ENCODE measurements at regions of chr3 and their contacts with region 1.

Region 1: GRCh38 chr3:114272271-114272670 is 21.6 kb upstream of the TIGIT start:
- DNase-seq: no peak
- H3K4me3 ChIP-seq: no peak overlapping the region
- H3K27ac ChIP-seq: no peak overlapping the region
- H3K4me1 ChIP-seq: peaks cover 4% of the 10 kb centered on the region
- H3K27me3 ChIP-seq: no peaks in the 10 kb centered on the region
- CTCF ChIP-seq: no peak

Region 2: GRCh38 chr3:114223143-114223542 is 49.1 kb before region 1 on chr3:
- CTCF ChIA-PET with region 1: no interaction called
- dilution Hi-C with region 1: no loop called
- in situ Hi-C with region 1: no loop called
- intact Hi-C with region 1: no loop called
- DNase-seq: no peak
- H3K4me3 ChIP-seq: no peak overlapping the region
- H3K27ac ChIP-seq: no peak overlapping the region
- H3K4me1 ChIP-seq: no peaks in the 10 kb centered on the region
- H3K27me3 ChIP-seq: no peaks in the 10 kb centered on the region
- CTCF ChIP-seq: no peak

Region 3: GRCh38 chr3:114310695-114311094 is 38.4 kb after region 1 on chr3:
- CTCF ChIA-PET with region 1: no interaction called
- dilution Hi-C with region 1: loop called (anchors 5 kb)
- in situ Hi-C with region 1: no loop called
- intact Hi-C with region 1: no loop called
- DNase-seq: no peak
- H3K4me3 ChIP-seq: no peak overlapping the region
- H3K27ac ChIP-seq: no peak overlapping the region
- H3K4me1 ChIP-seq: no peaks in the 10 kb centered on the region
- H3K27me3 ChIP-seq: peaks cover 3% of the 10 kb centered on the region
- CTCF ChIP-seq: no peak

Measured in mammary epithelial cell (primary cell).